ENCODE measurements at regions of chr7 and their contacts with region 1.

Region 1: DNA sequence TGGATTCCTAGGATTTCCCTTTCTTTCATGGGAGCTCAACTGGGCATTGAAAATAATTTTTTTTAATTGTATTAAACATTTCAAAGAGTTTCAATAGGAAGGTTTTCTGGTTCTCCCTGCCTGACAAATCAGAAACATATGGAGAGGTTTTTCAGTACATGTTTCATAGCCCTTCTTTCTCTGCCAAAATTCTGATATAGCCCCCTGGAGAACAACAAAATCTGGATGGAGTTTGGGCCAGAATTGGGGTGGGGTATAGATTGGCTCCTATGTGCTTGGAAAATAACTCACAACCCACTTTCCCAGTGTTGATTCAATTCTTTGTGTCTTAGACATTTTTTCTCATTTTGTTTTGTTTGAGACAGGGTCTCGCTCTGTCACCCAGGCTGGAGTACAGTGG is 24.6 kb upstream of the EIF4H start:
- DNase-seq: no peak
- ATAC-seq: no peak
- H3K4me3 ChIP-seq: no peak overlapping the region
- H3K4me3 Mint-ChIP-seq: no peak overlapping the region
- H3K27ac ChIP-seq: no peak overlapping the region
- H3K27ac Mint-ChIP-seq: no peak overlapping the region
- H3K4me1 ChIP-seq: no peaks in the 10 kb centered on the region
- H3K4me1 Mint-ChIP-seq: no peaks in the 10 kb centered on the region
- H3K27me3 ChIP-seq: peaks cover 0 to 8% of the 10 kb centered on the region in 2 experiments
- H3K27me3 Mint-ChIP-seq: peaks cover 0 to 3% of the 10 kb centered on the region in 2 donors

Region 2: DNA sequence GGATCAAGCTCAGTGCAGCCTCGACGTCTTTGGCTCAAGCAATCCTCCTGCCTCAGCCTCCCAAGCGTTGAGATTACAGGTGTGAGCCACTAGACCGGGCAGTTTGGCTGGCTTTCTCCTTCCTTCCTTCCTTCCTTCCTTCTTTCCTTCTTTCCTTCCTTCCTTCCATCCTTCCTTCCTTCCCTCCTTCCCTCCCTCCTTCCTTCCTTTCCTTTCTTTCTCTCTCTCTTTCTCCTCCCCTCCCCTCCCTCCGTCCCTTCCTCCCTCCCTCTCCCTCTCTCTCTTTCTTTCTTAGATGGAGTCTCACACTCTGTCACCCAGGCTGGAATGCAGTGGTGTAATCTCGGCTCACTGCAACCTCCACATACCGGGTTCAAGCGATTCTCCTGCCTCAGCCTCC is 489.6 kb before region 1 on chr7:
- CTCF ChIA-PET with region 1: no interaction called
- POLR2A ChIA-PET with region 1: no interaction called
- DNase-seq: no peak
- ATAC-seq: no peak
- H3K4me3 ChIP-seq: no peak overlapping the region
- H3K4me3 Mint-ChIP-seq: no peak overlapping the region
- H3K27ac ChIP-seq: no peak overlapping the region
- H3K27ac Mint-ChIP-seq: no peak overlapping the region
- H3K4me1 ChIP-seq: no peaks in the 10 kb centered on the region
- H3K4me1 Mint-ChIP-seq: peaks cover 0 to 4% (median 0%) of the 10 kb centered on the region in 3 donors
- H3K27me3 ChIP-seq: peaks cover 0 to 39% of the 10 kb centered on the region in 2 experiments
- H3K27me3 Mint-ChIP-seq: peaks cover 38 to 40% of the 10 kb centered on the region in 2 donors

Region 3: GRCh38 chr7:73718905-73719805 is 430.4 kb before region 1 on chr7 and contains the start of gene STX1A:
- CTCF ChIA-PET with region 1: no interaction called
- POLR2A ChIA-PET with region 1: no interaction called
- DNase-seq: peak in 34 of 35 experiments; percentile 35 to 87 (median 60)
- ATAC-seq: peak; percentile 79 to 87 (median 84)
- H3K4me3 ChIP-seq: peak within 1 kb of the TSS; percentile 73 to 82
- H3K4me3 Mint-ChIP-seq: peak within 1 kb of the TSS; percentile 74 to 87 (median 86)
- H3K27ac ChIP-seq: no peak within 1 kb of the TSS
- H3K27ac Mint-ChIP-seq: peak within 1 kb of the TSS; percentile 36 to 78
- H3K4me1 ChIP-seq: peaks cover 14 to 42% of the 10 kb centered on the region in 2 experiments
- H3K4me1 Mint-ChIP-seq: peaks cover 25 to 33% (median 26%) of the 10 kb centered on the region in 3 donors
- H3K27me3 ChIP-seq: peaks cover 5 to 29% of the 10 kb centered on the region in 2 experiments
- H3K27me3 Mint-ChIP-seq: peaks cover 2 to 5% of the 10 kb centered on the region in 2 donors
- total RNA-seq, gene STX1A: 7.7 to 18.1 (median 13.0) TPM

Region 4: GRCh38 chr7:74272305-74273038 is 122.9 kb after region 1 on chr7:
- CTCF ChIA-PET with region 1: no interaction called
- POLR2A ChIA-PET with region 1: no interaction called
- DNase-seq: peak in 4 of 35 experiments; percentile 11 to 41 (median 16)
- ATAC-seq: no peak
- H3K4me3 ChIP-seq: no peak overlapping the region
- H3K4me3 Mint-ChIP-seq: no peak overlapping the region
- H3K27ac ChIP-seq: no peak overlapping the region
- H3K27ac Mint-ChIP-seq: no peak overlapping the region
- H3K4me1 ChIP-seq: peaks cover 0 to 15% of the 10 kb centered on the region in 2 experiments
- H3K4me1 Mint-ChIP-seq: peaks cover 0 to 15% (median 9%) of the 10 kb centered on the region in 3 donors
- H3K27me3 ChIP-seq: peaks cover 0 to 32% of the 10 kb centered on the region in 2 experiments
- H3K27me3 Mint-ChIP-seq: peaks cover 0 to 6% of the 10 kb centered on the region in 2 donors

Region 5: GRCh38 chr7:74388880-74389415 is 239.3 kb after region 1 on chr7:
- CTCF ChIA-PET with region 1: no interaction called
- POLR2A ChIA-PET with region 1: interaction called in 1 of 2 experiments, 13 read pairs
- DNase-seq: no peak
- ATAC-seq: no peak
- H3K4me3 ChIP-seq: no peak overlapping the region
- H3K4me3 Mint-ChIP-seq: no peak overlapping the region
- H3K27ac ChIP-seq: no peak overlapping the region
- H3K27ac Mint-ChIP-seq: no peak overlapping the region
- H3K4me1 ChIP-seq: no peaks in the 10 kb centered on the region
- H3K4me1 Mint-ChIP-seq: no peaks in the 10 kb centered on the region
- H3K27me3 ChIP-seq: no peaks in the 10 kb centered on the region
- H3K27me3 Mint-ChIP-seq: no peaks in the 10 kb centered on the region

Measured in T-cell (primary cell).